MCF 10A (cell line): ENCODE measurements at regions of chr10 and their contacts with region 1.

Region 1: GRCh38 chr10:55668326-55668922 is 692.6 kb downstream of the ZWINT start:
- DNase-seq: peak; percentile 40
- H3K4me3 Mint-ChIP-seq: no peak overlapping the region
- H3K27ac Mint-ChIP-seq: no peak overlapping the region
- H3K4me1 Mint-ChIP-seq: no peaks in the 10 kb centered on the region
- H3K27me3 Mint-ChIP-seq: peaks cover 40% of the 10 kb centered on the region
- CTCF ChIP-seq: peak; percentile 43

Region 2: DNA sequence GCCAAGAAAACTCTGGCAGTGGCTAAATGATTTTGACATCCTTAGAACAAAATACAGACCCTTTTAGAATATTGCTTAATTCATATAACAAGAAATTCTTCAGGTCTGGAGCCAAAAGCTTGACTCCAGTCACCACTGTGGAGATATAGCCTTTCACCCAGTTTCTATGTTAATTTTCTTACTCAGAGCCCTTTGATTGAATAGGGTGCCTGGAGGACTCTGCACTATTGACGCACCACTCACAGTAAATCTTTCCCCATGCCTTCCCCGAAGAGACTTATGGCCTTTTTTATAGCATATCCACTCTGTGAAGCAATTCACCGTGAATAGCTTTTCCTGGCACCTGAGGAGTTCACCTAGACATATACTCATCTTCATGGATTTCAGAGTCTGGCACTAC is 78.8 kb after region 1 on chr10:
- CTCF ChIA-PET with region 1: no interaction called
- POLR2A ChIA-PET with region 1: no interaction called
- intact Hi-C with region 1: loop called (anchors 5 kb)
- DNase-seq: peak; percentile 25
- H3K4me3 Mint-ChIP-seq: no peak overlapping the region
- H3K27ac Mint-ChIP-seq: no peak overlapping the region
- H3K4me1 Mint-ChIP-seq: no peaks in the 10 kb centered on the region
- H3K27me3 Mint-ChIP-seq: peaks cover 66% of the 10 kb centered on the region
- CTCF ChIP-seq: no peak

Region 3: GRCh38 chr10:56116684-56117083 is 448.3 kb after region 1 on chr10:
- CTCF ChIA-PET with region 1: no interaction called
- POLR2A ChIA-PET with region 1: no interaction called
- intact Hi-C with region 1: loop called (anchors 1 kb)
- DNase-seq: peak; percentile 20
- H3K4me3 Mint-ChIP-seq: no peak overlapping the region
- H3K27ac Mint-ChIP-seq: no peak overlapping the region
- H3K4me1 Mint-ChIP-seq: no peaks in the 10 kb centered on the region
- H3K27me3 Mint-ChIP-seq: peaks cover 13% of the 10 kb centered on the region
- CTCF ChIP-seq: peak; percentile 33

Region 4: GRCh38 chr10:56823849-56824248 is 1155.4 kb after region 1 on chr10:
- CTCF ChIA-PET with region 1: no interaction called
- POLR2A ChIA-PET with region 1: no interaction called
- intact Hi-C with region 1: loop called (anchors 10 kb)
- DNase-seq: peak; percentile 36
- H3K4me3 Mint-ChIP-seq: no peak overlapping the region
- H3K27ac Mint-ChIP-seq: no peak overlapping the region
- H3K4me1 Mint-ChIP-seq: no peaks in the 10 kb centered on the region
- H3K27me3 Mint-ChIP-seq: no peaks in the 10 kb centered on the region
- CTCF ChIP-seq: peak; percentile 38